H1 (cell line): ENCODE measurements at regions of chr10 and their contacts with region 1.

Region 1: DNA sequence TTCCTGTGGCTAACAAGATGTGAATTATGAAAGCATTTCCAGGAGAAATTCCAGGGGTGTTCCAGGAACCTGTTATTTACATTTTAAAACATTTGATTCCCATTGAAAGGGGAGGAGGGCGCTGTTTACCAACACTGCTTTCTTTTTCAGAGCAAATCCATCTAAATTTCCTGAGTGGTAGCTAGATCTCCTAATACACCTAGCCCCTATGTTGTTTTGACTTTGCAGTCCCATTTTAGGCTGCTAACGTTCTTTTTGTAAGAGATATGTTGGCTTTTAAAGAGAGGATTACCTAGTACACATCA is 130.8 kb downstream of the TCF7L2 start:
- DNase-seq: no peak
- H3K4me3 ChIP-seq: no peak overlapping the region
- H3K27ac ChIP-seq: no peak overlapping the region
- H3K4me1 ChIP-seq: peaks cover 2 to 22% (median 12%) of the 10 kb centered on the region in 4 experiments; a peak in 6 of 7 replicates
- H3K27me3 ChIP-seq: no peaks in the 10 kb centered on the region
- CTCF ChIP-seq: peak in 2 of 3 experiments; percentile 27 to 57; a peak in 2 of 4 replicates
- EP300 ChIP-seq: no peak
- POLR2A ChIP-seq: no peak
- RAD21 ChIP-seq: peak; percentile 54 to 55

Region 2: DNA sequence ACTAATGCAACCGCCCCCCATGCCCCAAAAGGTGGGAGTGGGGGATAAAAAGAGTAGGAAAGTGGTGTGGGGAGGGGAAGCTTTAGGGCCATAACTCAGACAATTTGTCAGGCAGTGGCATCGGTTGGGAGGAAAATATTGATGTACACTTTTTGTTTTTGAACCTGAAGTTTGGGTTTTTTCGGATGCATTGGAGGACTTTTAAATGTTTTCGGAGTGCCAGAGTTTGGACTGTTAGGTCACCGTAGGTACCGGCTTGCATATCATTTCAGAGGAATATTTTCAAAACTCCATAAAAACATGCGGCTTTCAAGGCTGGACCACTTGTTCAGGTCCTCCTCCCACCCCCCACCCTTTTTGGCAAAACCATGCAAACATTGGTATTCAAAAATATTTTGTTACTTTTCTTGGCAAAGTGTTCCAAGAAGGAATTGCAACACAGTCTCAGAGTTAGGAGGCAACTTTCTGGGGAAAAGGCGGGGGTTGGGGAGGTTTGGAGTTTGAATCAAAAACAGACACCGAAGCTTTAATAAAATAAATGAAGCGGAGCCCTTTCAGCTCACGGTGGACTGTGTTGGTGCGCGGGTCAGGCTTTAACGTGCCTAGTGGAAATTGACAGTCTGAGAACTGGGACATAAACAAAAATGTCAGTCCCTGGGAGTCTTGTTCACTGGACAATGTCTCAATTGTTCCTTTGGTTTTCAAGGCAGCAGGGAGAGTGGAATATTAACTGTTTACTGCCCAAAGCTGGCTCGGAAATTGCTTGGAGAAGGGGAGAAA is 21.7 kb before region 1 on chr10:
- CTCF ChIA-PET with region 1: interaction called, 13 read pairs
- POLR2A ChIA-PET with region 1: no interaction called
- DNase-seq: no peak
- H3K4me3 ChIP-seq: no peak overlapping the region
- H3K27ac ChIP-seq: no peak overlapping the region
- H3K4me1 ChIP-seq: peaks cover 11 to 58% (median 43%) of the 10 kb centered on the region in 4 experiments
- H3K27me3 ChIP-seq: no peaks in the 10 kb centered on the region
- CTCF ChIP-seq: no peak
- EP300 ChIP-seq: no peak
- POLR2A ChIP-seq: no peak
- RAD21 ChIP-seq: no peak

Region 3: DNA sequence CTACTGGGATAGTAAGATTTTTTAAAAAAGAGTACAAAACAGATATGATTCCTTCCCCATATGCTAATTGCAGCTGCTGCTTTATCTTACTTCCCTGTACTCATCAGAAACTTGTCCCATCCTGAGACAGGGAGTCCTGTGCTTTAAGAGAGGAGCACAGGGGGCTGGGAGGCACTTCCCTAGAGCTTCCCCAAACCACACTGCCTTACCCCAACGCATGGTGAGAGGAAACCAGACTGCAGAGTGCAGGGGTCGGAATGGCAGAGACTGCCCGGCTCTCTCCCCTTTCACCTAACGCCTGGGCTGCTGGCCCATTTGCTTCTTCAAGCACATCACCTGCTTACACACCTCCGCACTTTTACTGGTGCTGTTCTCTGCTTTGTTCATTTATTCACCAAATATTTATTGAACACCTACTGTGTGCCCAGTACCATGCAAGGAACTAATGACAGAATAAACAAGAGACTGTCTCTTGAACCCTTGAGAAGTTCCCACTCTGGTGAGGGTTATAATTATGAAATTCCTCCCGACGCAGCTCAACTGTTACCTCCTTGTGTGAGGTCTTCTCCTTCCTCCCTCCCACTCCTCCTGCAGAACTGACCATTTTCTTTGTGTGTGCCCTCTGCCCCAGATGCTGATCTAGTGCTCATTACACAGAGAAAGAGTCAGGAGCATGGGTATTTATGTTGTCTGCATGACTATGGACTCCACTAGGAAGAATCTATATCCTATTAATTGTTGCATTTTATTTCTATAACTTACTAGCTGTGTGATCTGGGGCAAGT is 158.9 kb after region 1 on chr10:
- CTCF ChIA-PET with region 1: no interaction called
- POLR2A ChIA-PET with region 1: no interaction called
- DNase-seq: no peak
- H3K4me3 ChIP-seq: no peak overlapping the region
- H3K27ac ChIP-seq: no peak overlapping the region
- H3K4me1 ChIP-seq: no peaks in the 10 kb centered on the region
- H3K27me3 ChIP-seq: no peaks in the 10 kb centered on the region
- CTCF ChIP-seq: no peak
- EP300 ChIP-seq: no peak
- POLR2A ChIP-seq: no peak
- RAD21 ChIP-seq: no peak